ENCODE measurements at regions of chr2 and their contacts with region 1.

Region 1: GRCh38 chr2:9813312-9814133 is 29.8 kb upstream of the TAF1B start:
- DNase-seq: peak; percentile 63
- H3K4me3 Mint-ChIP-seq: no peak overlapping the region
- H3K27ac Mint-ChIP-seq: no peak overlapping the region
- H3K4me1 Mint-ChIP-seq: peaks cover 12% of the 10 kb centered on the region
- H3K27me3 Mint-ChIP-seq: peaks cover 19% of the 10 kb centered on the region

Region 2: GRCh38 chr2:9770308-9771100 is 43.0 kb before region 1 on chr2:
- intact Hi-C with region 1: no loop called
- DNase-seq: peak; percentile 37
- H3K4me3 Mint-ChIP-seq: no peak overlapping the region
- H3K27ac Mint-ChIP-seq: no peak overlapping the region
- H3K4me1 Mint-ChIP-seq: peaks cover 17% of the 10 kb centered on the region
- H3K27me3 Mint-ChIP-seq: no peaks in the 10 kb centered on the region

Region 3: GRCh38 chr2:10043906-10044601 is 230.5 kb after region 1 on chr2:
- intact Hi-C with region 1: loop called (anchors 1 kb)
- DNase-seq: peak; percentile 88
- H3K4me3 Mint-ChIP-seq: peak overlapping the region; percentile 71
- H3K27ac Mint-ChIP-seq: peak overlapping the region; percentile 60
- H3K4me1 Mint-ChIP-seq: peaks cover 16% of the 10 kb centered on the region
- H3K27me3 Mint-ChIP-seq: peaks cover 16% of the 10 kb centered on the region